CD8-positive, alpha-beta memory T cell (primary cell): ENCODE measurements at regions of chrX and their contacts with region 1.

Region 1: GRCh38 chrX:107741404-107741790 is 34.2 kb downstream of the TSC22D3 start:
- DNase-seq: no peak
- H3K4me3 ChIP-seq: peak overlapping the region; percentile 51
- H3K4me3 Mint-ChIP-seq: peak overlapping the region; percentile 78 to 88 (median 83)
- H3K27ac ChIP-seq: peak overlapping the region; percentile 61
- H3K27ac Mint-ChIP-seq: peak overlapping the region; percentile 92 to 99 (median 96)
- H3K4me1 ChIP-seq: peaks cover 44% of the 10 kb centered on the region
- H3K4me1 Mint-ChIP-seq: peaks cover 38 to 54% (median 42%) of the 10 kb centered on the region in 3 donors
- H3K27me3 ChIP-seq: no peaks in the 10 kb centered on the region
- H3K27me3 Mint-ChIP-seq: peaks cover 0 to 5% of the 10 kb centered on the region in 2 donors

Region 2: GRCh38 chrX:107627838-107628661 is 113.3 kb before region 1 on chrX and contains the start of gene PRPS1:
- CTCF ChIA-PET with region 1: no interaction called
- POLR2A ChIA-PET with region 1: interaction called, 11 read pairs
- DNase-seq: peak; percentile 80 to 92 (median 87)
- H3K4me3 ChIP-seq: peak within 1 kb of the TSS; percentile 86
- H3K4me3 Mint-ChIP-seq: peak within 1 kb of the TSS; percentile 88 to 97 (median 93)
- H3K27ac ChIP-seq: peak within 1 kb of the TSS; percentile 83
- H3K27ac Mint-ChIP-seq: peak within 1 kb of the TSS; percentile 90 to 96 (median 93)
- H3K4me1 ChIP-seq: peaks cover 9% of the 10 kb centered on the region
- H3K4me1 Mint-ChIP-seq: peaks cover 27 to 40% (median 35%) of the 10 kb centered on the region in 3 donors
- H3K27me3 ChIP-seq: no peaks in the 10 kb centered on the region
- H3K27me3 Mint-ChIP-seq: peaks cover 0 to 4% of the 10 kb centered on the region in 2 donors
- total RNA-seq, gene PRPS1: 110 to 113 TPM

Region 3: GRCh38 chrX:107672955-107673378 is 68.4 kb before region 1 on chrX:
- CTCF ChIA-PET with region 1: interaction called, 33 read pairs
- POLR2A ChIA-PET with region 1: interaction called, 22 read pairs
- DNase-seq: peak; percentile 61 to 91 (median 90)
- H3K4me3 ChIP-seq: peak overlapping the region; percentile 66
- H3K4me3 Mint-ChIP-seq: peak overlapping the region; percentile 81 to 87 (median 84)
- H3K27ac ChIP-seq: peak overlapping the region; percentile 99
- H3K27ac Mint-ChIP-seq: peak overlapping the region; percentile 99 to 100 (median 100)
- H3K4me1 ChIP-seq: peaks cover 45% of the 10 kb centered on the region
- H3K4me1 Mint-ChIP-seq: peaks cover 48 to 63% (median 59%) of the 10 kb centered on the region in 3 donors
- H3K27me3 ChIP-seq: no peaks in the 10 kb centered on the region
- H3K27me3 Mint-ChIP-seq: peaks cover 0 to 14% of the 10 kb centered on the region in 2 donors

Region 4: GRCh38 chrX:107716816-107717700 is 24.3 kb before region 1 on chrX:
- CTCF ChIA-PET with region 1: interaction called, 47 read pairs
- POLR2A ChIA-PET with region 1: interaction called, 33 read pairs
- DNase-seq: peak; percentile 78 to 96 (median 93)
- H3K4me3 ChIP-seq: peak overlapping the region; percentile 77
- H3K4me3 Mint-ChIP-seq: peak overlapping the region; percentile 92 to 100 (median 94)
- H3K27ac ChIP-seq: peak overlapping the region; percentile 99
- H3K27ac Mint-ChIP-seq: peak overlapping the region; percentile 96 to 100 (median 98)
- H3K4me1 ChIP-seq: peaks cover 44% of the 10 kb centered on the region
- H3K4me1 Mint-ChIP-seq: peaks cover 48 to 56% (median 54%) of the 10 kb centered on the region in 3 donors
- H3K27me3 ChIP-seq: no peaks in the 10 kb centered on the region
- H3K27me3 Mint-ChIP-seq: peaks cover 0 to 44% of the 10 kb centered on the region in 2 donors

Region 5: GRCh38 chrX:107857799-107858198 is 116.4 kb after region 1 on chrX:
- CTCF ChIA-PET with region 1: no interaction called
- POLR2A ChIA-PET with region 1: no interaction called
- DNase-seq: no peak
- H3K4me3 ChIP-seq: no peak overlapping the region
- H3K4me3 Mint-ChIP-seq: no peak overlapping the region
- H3K27ac ChIP-seq: no peak overlapping the region
- H3K27ac Mint-ChIP-seq: no peak overlapping the region
- H3K4me1 ChIP-seq: no peaks in the 10 kb centered on the region
- H3K4me1 Mint-ChIP-seq: no peaks in the 10 kb centered on the region
- H3K27me3 ChIP-seq: no peaks in the 10 kb centered on the region
- H3K27me3 Mint-ChIP-seq: no peaks in the 10 kb centered on the region

Region 6: DNA sequence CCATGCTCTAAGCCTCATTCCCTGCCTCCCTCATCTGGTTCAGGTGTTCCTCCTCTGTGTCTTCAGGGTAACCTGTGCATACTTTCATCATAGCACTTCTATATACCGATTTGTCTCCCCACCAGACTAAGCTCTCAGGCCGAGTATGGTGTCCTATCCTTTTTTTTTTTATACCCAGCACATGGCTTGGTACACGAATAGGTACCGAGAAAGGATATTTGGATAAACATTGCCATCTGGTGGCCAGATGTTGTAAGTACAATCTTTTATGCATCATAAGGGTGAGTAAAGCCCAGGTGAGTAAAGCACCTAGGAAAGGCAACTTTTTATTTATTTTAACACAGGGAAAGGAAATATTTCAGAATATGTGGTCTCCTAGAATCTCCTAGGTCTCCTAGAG is 152.6 kb after region 1 on chrX:
- CTCF ChIA-PET with region 1: no interaction called
- POLR2A ChIA-PET with region 1: no interaction called
- DNase-seq: peak in 2 of 5 donors; percentile 51 to 53
- H3K4me3 ChIP-seq: no peak overlapping the region
- H3K4me3 Mint-ChIP-seq: no peak overlapping the region
- H3K27ac ChIP-seq: no peak overlapping the region
- H3K27ac Mint-ChIP-seq: no peak overlapping the region
- H3K4me1 ChIP-seq: no peaks in the 10 kb centered on the region
- H3K4me1 Mint-ChIP-seq: peaks cover 0 to 3% (median 0%) of the 10 kb centered on the region in 3 donors
- H3K27me3 ChIP-seq: no peaks in the 10 kb centered on the region
- H3K27me3 Mint-ChIP-seq: peaks cover 0 to 4% of the 10 kb centered on the region in 2 donors

Region 7: DNA sequence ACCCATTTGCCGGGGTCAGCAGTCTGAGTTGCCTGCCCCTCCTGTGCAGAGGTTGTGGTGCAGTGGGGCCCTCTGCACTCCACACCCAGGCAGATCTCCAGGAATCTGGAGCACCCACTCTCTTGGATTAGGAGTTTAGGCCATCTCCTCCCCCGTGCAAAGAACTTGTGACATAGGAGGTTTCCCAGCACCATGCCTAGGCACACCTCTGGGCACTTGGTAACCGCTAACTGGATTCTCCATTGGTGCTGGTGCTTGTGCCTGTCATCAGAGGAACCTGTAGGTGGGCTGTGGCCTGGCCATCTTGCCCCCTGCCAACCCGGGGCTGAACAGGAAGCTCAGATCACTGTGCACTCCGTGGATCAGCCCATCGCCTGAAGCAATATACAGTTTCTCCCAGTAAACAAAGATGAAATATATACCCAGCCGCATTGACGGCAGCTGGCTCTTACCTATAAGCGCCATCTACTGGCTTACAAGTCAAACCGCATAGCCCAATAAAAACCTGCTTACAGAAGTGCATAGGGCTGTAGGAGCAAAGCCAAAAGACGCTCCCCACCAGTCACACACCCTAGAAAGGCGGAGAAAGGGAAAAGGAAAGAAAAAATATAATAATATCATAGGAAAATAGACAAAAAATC is 259.9 kb after region 1 on chrX:
- CTCF ChIA-PET with region 1: no interaction called
- POLR2A ChIA-PET with region 1: no interaction called
- DNase-seq: peak in 3 of 5 donors; percentile 38 to 56 (median 56)
- H3K4me3 ChIP-seq: no peak overlapping the region
- H3K4me3 Mint-ChIP-seq: peak overlapping the region in 2 of 7 donors; percentile 1 to 37
- H3K27ac ChIP-seq: no peak overlapping the region
- H3K27ac Mint-ChIP-seq: peak overlapping the region in 1 of 8 donors; percentile 69
- H3K4me1 ChIP-seq: peaks cover 4% of the 10 kb centered on the region
- H3K4me1 Mint-ChIP-seq: peaks cover 4 to 9% (median 7%) of the 10 kb centered on the region in 3 donors
- H3K27me3 ChIP-seq: no peaks in the 10 kb centered on the region
- H3K27me3 Mint-ChIP-seq: peaks cover 4 to 16% of the 10 kb centered on the region in 2 donors